Esophagus muscularis mucosa (tissue), 4 donors: ENCODE measurements at regions of chr11 and their contacts with region 1.

Region 1: DNA sequence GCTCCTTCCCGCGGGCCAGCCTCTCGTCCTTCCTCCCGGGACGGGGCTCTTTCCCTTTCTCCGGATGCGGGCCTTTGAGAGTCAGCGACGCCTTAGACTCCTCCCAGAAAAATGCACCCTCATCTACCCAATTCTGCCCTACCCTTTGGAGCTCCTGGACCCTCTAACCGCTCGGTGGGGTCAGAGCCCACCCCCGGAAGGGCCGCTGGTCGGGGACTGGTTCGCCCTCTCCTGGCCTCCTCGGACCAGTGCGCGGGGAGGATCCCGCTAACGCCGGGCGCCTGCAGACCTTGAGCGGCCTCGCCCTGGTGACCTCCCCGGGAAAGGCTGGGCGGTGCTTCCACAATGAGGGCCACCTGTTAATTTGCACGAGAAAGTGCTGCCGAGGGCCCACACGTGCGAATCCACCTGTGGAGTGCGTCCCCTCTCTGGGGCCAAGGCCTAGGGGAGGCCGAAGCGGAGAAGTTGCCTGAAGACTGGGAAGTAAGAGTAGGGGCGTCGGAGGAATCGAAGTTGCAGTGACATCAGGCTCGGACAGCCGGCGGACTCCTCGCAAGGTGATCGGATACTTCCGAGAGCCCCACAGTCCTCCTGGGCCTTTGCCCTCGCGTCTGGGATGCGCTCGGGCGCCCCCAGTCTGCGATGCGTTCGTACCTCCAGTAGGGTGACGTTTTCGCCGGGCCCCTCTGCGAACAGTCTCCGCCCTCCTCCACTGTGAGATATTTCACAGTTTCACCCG is 61.5 kb downstream of the ENDOD1 start:
- DNase-seq: peak; percentile 98
- H3K4me3 ChIP-seq: peak overlapping the region; percentile 60 to 67 (median 64)
- H3K27ac ChIP-seq: peak overlapping the region; percentile 84 to 88 (median 84)
- H3K4me1 ChIP-seq: peaks cover 29 to 67% (median 56%) of the 10 kb centered on the region in 4 donors
- H3K27me3 ChIP-seq: no peaks in the 10 kb centered on the region
- CTCF ChIP-seq: peak; percentile 71 to 94 (median 81)
- EP300 ChIP-seq: no peak
- POLR2A ChIP-seq: peak; percentile 44

Region 2: DNA sequence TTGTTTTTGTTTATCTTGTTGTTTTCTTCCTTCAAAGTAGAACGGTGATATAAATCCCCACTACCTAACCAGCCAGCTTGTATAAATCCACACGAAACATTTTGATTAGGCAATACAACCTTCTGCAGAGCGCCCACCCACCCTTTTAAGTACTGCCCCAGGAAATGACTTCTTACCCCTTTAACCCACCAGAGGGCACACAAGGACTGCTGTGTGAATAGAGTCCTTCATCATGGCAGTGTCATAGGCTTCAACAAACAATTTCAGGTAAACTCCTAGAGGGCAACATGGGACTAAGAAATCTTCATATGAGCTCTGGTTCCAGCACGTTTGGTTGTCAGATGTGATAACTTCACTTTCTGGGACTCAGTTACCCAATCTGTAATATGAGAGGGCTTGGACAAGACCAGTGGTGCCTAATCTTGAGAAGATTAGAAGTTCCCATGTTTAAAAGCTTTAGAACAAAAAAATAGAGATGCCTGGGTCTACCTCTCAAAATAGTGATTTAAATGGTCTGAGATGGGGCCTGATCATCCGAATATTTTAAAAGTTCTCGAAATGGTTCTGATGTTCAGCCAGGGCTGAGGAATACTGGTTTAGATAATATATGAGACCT is 527.9 kb before region 1 on chr11:
- intact Hi-C with region 1: loop called (anchors 10 kb)
- DNase-seq: no peak
- H3K4me3 ChIP-seq: no peak overlapping the region
- H3K27ac ChIP-seq: no peak overlapping the region
- H3K4me1 ChIP-seq: peaks cover 0 to 6% (median 0%) of the 10 kb centered on the region in 4 donors
- H3K27me3 ChIP-seq: no peaks in the 10 kb centered on the region
- CTCF ChIP-seq: peak; percentile 78 to 88 (median 86)
- EP300 ChIP-seq: no peak
- POLR2A ChIP-seq: no peak

Region 3: DNA sequence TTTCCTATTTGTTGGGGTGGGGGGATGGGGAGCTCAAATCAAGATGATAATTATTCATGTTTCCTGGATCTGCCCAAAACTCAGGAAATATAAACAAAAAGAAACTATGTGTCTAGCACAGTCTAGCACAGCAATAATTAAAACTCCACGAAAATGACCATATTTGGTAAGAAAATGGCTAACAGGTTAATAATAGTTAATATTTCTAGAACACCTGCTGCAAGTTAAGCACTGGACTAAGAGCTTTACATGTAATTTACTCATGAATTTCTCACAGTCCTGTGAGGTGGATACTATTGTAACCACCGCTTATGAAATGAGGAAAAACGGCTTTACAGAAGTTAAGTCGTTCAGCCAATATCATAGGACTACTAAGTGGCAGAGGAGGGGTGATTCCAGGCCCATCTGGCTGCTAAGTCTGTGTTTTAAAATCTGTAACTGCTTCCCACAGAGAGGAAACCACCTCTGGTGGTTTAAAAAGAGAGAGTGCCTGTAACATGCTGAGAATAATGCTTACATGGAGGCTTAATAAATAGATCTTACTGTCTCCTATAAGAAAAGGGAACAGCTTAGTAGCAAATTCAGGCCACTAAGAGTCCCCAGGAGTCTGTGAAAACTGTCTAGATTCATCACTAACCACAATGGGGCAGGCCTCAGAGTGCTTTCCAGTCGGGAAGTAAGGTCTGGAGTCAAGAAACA is 393.9 kb before region 1 on chr11:
- intact Hi-C with region 1: no loop called
- DNase-seq: no peak
- H3K4me3 ChIP-seq: no peak overlapping the region
- H3K27ac ChIP-seq: peak overlapping the region; percentile 55 to 69 (median 61)
- H3K4me1 ChIP-seq: peaks cover 11 to 50% (median 40%) of the 10 kb centered on the region in 4 donors
- H3K27me3 ChIP-seq: no peaks in the 10 kb centered on the region
- CTCF ChIP-seq: no peak
- EP300 ChIP-seq: no peak
- POLR2A ChIP-seq: no peak

Region 4: GRCh38 chr11:95067039-95067840 is 83.9 kb before region 1 on chr11:
- intact Hi-C with region 1: loop called (anchors 2 kb)
- DNase-seq: peak; percentile 95
- H3K4me3 ChIP-seq: peak overlapping the region; percentile 78 to 89 (median 84)
- H3K27ac ChIP-seq: peak overlapping the region; percentile 97 to 98 (median 98)
- H3K4me1 ChIP-seq: peaks cover 11 to 28% (median 26%) of the 10 kb centered on the region in 4 donors
- H3K27me3 ChIP-seq: peaks cover 0 to 7% (median 0%) of the 10 kb centered on the region in 4 donors
- CTCF ChIP-seq: peak; percentile 29 to 75 (median 45)
- EP300 ChIP-seq: no peak
- POLR2A ChIP-seq: no peak

Region 5: DNA sequence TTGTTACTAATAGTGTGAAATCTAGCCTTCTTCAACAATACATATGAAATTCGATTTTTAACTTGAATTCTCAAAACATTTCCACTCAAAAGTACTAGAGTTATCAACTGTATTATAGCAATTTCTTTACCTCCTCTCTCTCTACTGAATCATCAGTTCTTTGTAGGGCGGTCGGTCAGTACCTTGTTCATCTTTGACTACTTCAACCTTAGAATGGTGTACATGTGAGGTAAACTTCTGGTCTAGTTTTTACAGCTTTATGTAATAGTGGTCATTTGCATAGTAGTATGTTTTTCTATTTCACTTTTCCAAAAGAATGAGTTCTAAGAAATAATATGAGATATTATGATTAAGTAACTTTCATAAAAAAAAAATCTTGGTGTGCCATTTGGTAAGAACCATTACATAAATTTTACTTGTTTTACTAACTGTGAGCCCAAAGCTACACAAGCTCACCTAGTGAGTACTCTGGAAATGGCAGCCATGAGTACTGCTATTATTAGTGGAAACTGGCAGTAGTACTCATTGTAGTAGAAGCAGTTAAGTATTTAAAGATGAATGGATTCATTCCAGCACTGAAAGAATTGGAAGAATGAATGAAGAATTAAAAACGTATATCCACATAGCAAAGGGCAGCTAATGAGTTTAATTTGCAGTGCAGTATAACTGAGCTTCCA is 49.8 kb after region 1 on chr11:
- intact Hi-C with region 1: no loop called
- DNase-seq: no peak
- H3K4me3 ChIP-seq: no peak overlapping the region
- H3K27ac ChIP-seq: no peak overlapping the region
- H3K4me1 ChIP-seq: no peaks in the 10 kb centered on the region
- H3K27me3 ChIP-seq: no peaks in the 10 kb centered on the region
- CTCF ChIP-seq: no peak
- EP300 ChIP-seq: no peak
- POLR2A ChIP-seq: no peak

Region 6: GRCh38 chr11:95231127-95231880 is 80.2 kb after region 1 on chr11 and contains the start of gene SESN3:
- intact Hi-C with region 1: loop called (anchors 5 kb)
- DNase-seq: peak; percentile 99
- H3K4me3 ChIP-seq: peak within 1 kb of the TSS; percentile 82 to 93 (median 88)
- H3K27ac ChIP-seq: peak within 1 kb of the TSS; percentile 85 to 92 (median 88)
- H3K4me1 ChIP-seq: peaks cover 14 to 37% (median 34%) of the 10 kb centered on the region in 4 donors
- H3K27me3 ChIP-seq: no peaks in the 10 kb centered on the region
- CTCF ChIP-seq: peak; percentile 10 to 32 (median 18)
- EP300 ChIP-seq: no peak
- POLR2A ChIP-seq: peak; percentile 58
- total RNA-seq, gene SESN3: 18.1 to 22.7 (median 21.4) TPM

Region 7: DNA sequence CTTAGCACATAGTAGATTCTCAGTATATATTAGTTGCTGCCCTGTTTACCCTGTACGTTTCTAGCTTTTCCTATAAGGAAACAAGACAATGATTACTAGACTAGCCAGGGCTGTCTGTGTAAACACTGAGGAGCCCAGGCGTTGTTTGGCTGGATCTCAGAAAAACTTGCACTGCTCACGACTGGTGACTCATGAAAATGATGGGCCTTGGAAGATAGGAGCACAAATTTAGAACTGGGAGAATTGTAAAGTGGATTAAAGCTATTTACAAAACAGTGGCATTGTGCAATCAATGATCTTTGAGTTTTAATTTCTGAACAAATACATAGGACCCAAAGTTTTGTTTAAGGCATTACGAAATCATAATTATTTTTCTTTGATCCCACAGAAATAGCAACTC is 361.6 kb after region 1 on chr11:
- intact Hi-C with region 1: loop called (anchors 10 kb)
- DNase-seq: peak; percentile 90
- H3K4me3 ChIP-seq: no peak overlapping the region
- H3K27ac ChIP-seq: peak overlapping the region; percentile 65 to 78 (median 77)
- H3K4me1 ChIP-seq: peaks cover 4 to 29% (median 19%) of the 10 kb centered on the region in 4 donors
- H3K27me3 ChIP-seq: no peaks in the 10 kb centered on the region
- CTCF ChIP-seq: no peak
- EP300 ChIP-seq: no peak
- POLR2A ChIP-seq: no peak

Region 8: GRCh38 chr11:95764267-95764898 is 613.3 kb after region 1 on chr11:
- intact Hi-C with region 1: loop called (anchors 2 kb)
- DNase-seq: no peak
- H3K4me3 ChIP-seq: no peak overlapping the region
- H3K27ac ChIP-seq: no peak overlapping the region
- H3K4me1 ChIP-seq: peaks cover 0 to 9% (median 0%) of the 10 kb centered on the region in 4 donors
- H3K27me3 ChIP-seq: no peaks in the 10 kb centered on the region
- CTCF ChIP-seq: peak; percentile 64 to 70 (median 68)
- EP300 ChIP-seq: no peak
- POLR2A ChIP-seq: no peak